Natural killer cell (primary cell): ENCODE measurements at regions of chr12 and their contacts with region 1.

Region 1: DNA sequence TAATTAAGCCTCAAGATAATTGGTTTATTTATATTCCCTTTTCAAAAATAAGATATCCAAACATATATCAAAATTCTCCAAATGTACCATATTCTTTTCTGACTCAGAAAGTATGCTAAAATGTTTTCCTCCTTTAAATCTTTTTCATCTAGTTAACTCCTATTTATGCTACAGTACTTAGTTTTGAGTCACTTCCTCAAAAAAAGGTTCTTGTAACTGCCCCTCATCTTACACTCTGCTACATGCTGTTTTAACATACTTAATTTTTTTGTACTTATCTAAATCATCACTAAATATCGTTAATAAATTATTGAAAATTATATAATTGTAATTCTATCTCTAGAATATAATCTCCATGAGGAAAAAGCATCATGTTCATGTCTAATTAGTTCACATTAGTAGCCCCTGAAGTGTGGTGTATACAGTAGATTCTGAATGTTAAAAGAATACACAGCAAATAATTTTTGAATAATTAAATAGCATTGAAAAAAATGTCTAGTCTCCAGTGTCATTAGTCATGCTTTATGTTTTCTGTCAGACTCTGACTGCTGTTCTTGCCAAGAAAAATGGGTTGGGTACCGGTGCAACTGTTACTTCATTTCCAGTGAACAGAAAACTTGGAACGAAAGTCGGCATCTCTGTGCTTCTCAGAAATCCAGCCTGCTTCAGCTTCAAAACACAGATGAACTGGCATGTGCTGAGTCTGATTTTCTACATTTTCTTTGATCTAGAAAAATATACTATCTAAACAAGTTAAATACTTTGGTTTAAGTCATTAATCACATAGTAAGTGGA is 3.5 kb downstream of the KLRD1 start:
- DNase-seq: peak in 1 of 2 donors; percentile 25
- ATAC-seq: peak in 1 of 3 donors; percentile 25
- H3K4me3 ChIP-seq: peak overlapping the region; percentile 87
- H3K4me3 Mint-ChIP-seq: peak overlapping the region; percentile 95
- H3K27ac ChIP-seq: peak overlapping the region; percentile 84
- H3K27ac Mint-ChIP-seq: peak overlapping the region; percentile 97 to 100
- H3K4me1 ChIP-seq: peaks cover 22% of the 10 kb centered on the region
- H3K4me1 Mint-ChIP-seq: peaks cover 51 to 66% of the 10 kb centered on the region in 2 donors
- H3K27me3 ChIP-seq: no peaks in the 10 kb centered on the region
- H3K27me3 Mint-ChIP-seq: no peaks in the 10 kb centered on the region
- CTCF ChIP-seq: no peak

Region 2: GRCh38 chr12:10265893-10266292 is 45.2 kb before region 1 on chr12:
- intact Hi-C with region 1: no loop called
- DNase-seq: no peak
- ATAC-seq: no peak
- H3K4me3 ChIP-seq: no peak overlapping the region
- H3K4me3 Mint-ChIP-seq: no peak overlapping the region
- H3K27ac ChIP-seq: no peak overlapping the region
- H3K27ac Mint-ChIP-seq: no peak overlapping the region
- H3K4me1 ChIP-seq: no peaks in the 10 kb centered on the region
- H3K4me1 Mint-ChIP-seq: peaks cover 0 to 4% of the 10 kb centered on the region in 2 donors
- H3K27me3 ChIP-seq: no peaks in the 10 kb centered on the region
- H3K27me3 Mint-ChIP-seq: no peaks in the 10 kb centered on the region
- CTCF ChIP-seq: no peak

Region 3: GRCh38 chr12:10276774-10277173 is 34.3 kb before region 1 on chr12:
- intact Hi-C with region 1: loop called (anchors 5 kb)
- DNase-seq: no peak
- ATAC-seq: peak in 1 of 3 donors; percentile 13
- H3K4me3 ChIP-seq: no peak overlapping the region
- H3K4me3 Mint-ChIP-seq: peak overlapping the region; percentile 45
- H3K27ac ChIP-seq: peak overlapping the region; percentile 25
- H3K27ac Mint-ChIP-seq: peak overlapping the region; percentile 72 to 73
- H3K4me1 ChIP-seq: peaks cover 22% of the 10 kb centered on the region
- H3K4me1 Mint-ChIP-seq: peaks cover 45 to 59% of the 10 kb centered on the region in 2 donors
- H3K27me3 ChIP-seq: no peaks in the 10 kb centered on the region
- H3K27me3 Mint-ChIP-seq: no peaks in the 10 kb centered on the region
- CTCF ChIP-seq: no peak

Region 4: DNA sequence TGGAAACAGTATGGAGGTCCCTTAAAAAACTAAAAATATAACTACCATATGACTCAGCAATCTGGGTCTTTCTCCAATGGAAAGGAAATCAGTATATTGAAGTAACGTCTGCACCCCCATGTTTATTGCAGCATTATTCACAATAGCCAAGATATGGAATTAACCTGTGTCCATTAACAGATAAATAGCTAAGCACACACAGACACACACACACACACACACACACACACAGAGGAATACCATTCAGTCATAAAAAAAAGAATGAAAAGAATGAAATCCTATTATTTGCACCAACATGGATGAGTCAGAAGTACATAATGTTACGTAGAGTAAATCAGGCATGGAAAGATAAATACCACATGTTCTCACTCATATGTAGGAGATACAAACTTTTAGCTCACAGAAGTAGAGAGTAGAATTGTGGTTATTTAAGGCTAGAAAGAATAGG is 74.1 kb after region 1 on chr12:
- intact Hi-C with region 1: loop called (anchors 2 kb)
- DNase-seq: no peak
- ATAC-seq: peak; percentile 53 to 60 (median 60)
- H3K4me3 ChIP-seq: peak overlapping the region; percentile 92
- H3K4me3 Mint-ChIP-seq: peak overlapping the region; percentile 86
- H3K27ac ChIP-seq: peak overlapping the region; percentile 86
- H3K27ac Mint-ChIP-seq: peak overlapping the region; percentile 89 to 91
- H3K4me1 ChIP-seq: peaks cover 16% of the 10 kb centered on the region
- H3K4me1 Mint-ChIP-seq: peaks cover 66 to 77% of the 10 kb centered on the region in 2 donors
- H3K27me3 ChIP-seq: no peaks in the 10 kb centered on the region
- H3K27me3 Mint-ChIP-seq: no peaks in the 10 kb centered on the region
- CTCF ChIP-seq: no peak